Transverse colon (tissue), 4 donors: ENCODE measurements at regions of chr2 and their contacts with region 1.

Region 1: DNA sequence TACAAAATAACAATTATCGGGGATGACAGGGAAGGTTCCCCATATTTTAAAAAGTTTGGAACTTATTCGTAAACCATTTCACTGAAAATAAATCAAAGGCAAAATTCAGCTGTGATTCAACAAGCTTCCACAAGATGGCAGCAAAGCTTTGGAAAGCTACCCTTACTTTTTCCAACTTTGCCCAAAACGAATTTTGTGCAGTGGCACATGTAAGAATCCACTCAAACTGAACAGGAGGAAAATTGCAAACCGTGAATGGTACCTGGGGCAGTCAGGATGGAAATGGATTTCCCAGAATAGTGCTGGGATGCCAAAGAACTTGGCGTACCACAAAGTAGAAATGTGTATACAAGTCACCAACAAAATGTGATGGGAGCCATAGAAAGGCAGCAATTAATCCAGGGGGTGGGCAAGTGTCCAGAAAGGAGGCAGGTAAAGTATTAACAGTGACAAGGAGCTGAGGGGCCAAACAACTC is 10.7 kb downstream of the RPL31 start:
- DNase-seq: peak; percentile 19
- H3K4me3 ChIP-seq: no peak overlapping the region
- H3K27ac ChIP-seq: no peak overlapping the region
- H3K4me1 ChIP-seq: peaks cover 0 to 10% (median 0%) of the 10 kb centered on the region in 4 donors
- H3K27me3 ChIP-seq: no peaks in the 10 kb centered on the region
- CTCF ChIP-seq: peak; percentile 80 to 89 (median 84)
- EP300 ChIP-seq: no peak
- POLR2A ChIP-seq: no peak

Region 2: GRCh38 chr2:100780203-100781008 is 232.3 kb before region 1 on chr2:
- in situ Hi-C with region 1: no loop called
- intact Hi-C with region 1: no loop called
- DNase-seq: peak; percentile 29
- H3K4me3 ChIP-seq: no peak overlapping the region
- H3K27ac ChIP-seq: peak overlapping the region; percentile 44 to 70 (median 66)
- H3K4me1 ChIP-seq: peaks cover 0 to 17% (median 3%) of the 10 kb centered on the region in 4 donors
- H3K27me3 ChIP-seq: no peaks in the 10 kb centered on the region
- CTCF ChIP-seq: no peak
- EP300 ChIP-seq: no peak
- POLR2A ChIP-seq: no peak

Region 3: GRCh38 chr2:101030863-101031554 is 18.3 kb after region 1 on chr2:
- in situ Hi-C with region 1: no loop called
- intact Hi-C with region 1: no loop called
- DNase-seq: no peak
- H3K4me3 ChIP-seq: no peak overlapping the region
- H3K27ac ChIP-seq: no peak overlapping the region
- H3K4me1 ChIP-seq: peaks cover 0 to 12% (median 6%) of the 10 kb centered on the region in 4 donors
- H3K27me3 ChIP-seq: no peaks in the 10 kb centered on the region
- CTCF ChIP-seq: no peak
- EP300 ChIP-seq: no peak
- POLR2A ChIP-seq: no peak

Region 4: DNA sequence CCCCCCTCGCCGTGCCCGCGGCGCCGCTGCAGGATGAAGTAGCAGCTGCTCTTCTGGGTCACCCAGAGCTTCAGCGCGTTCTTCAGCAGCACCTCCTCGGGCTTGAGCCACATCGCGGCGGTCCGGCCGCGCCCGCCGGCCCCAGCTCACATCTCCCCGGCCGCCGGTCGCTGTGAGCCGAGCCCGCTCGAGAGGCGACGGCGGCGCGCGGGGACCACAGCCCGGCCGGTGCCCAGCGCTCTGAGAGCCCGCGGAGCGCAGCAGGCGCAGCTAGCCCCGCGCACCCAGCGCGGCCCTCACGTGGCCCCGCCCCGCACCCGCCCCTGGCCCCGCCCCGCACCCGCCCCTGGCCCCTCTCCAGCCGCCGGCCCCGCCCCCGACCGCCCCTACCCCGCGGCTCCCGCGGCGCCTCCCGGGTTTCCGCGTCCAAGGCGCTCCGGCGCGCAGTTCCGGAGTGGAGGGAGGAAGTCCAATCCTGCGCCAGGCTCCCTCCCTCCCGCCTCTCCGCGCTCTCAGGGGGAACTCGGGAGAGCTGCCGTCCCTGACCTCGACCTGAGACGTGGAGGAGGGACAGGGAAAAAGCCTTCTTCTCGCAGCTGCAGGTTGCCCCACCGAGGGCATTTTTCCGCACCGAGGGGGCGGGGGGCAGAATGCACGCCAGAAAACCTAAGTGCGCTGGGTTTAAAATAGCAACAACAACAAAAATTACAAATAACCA is 138.6 kb after region 1 on chr2 and contains the start of gene TBC1D8:
- in situ Hi-C with region 1: loop called in 2 of 4 experiments (anchors 5 to 10 kb)
- intact Hi-C with region 1: loop called (anchors 2 kb)
- DNase-seq: peak; percentile 89
- H3K4me3 ChIP-seq: peak within 1 kb of the TSS; percentile 55 to 92 (median 78)
- H3K27ac ChIP-seq: peak within 1 kb of the TSS; percentile 82 to 91 (median 88)
- H3K4me1 ChIP-seq: peaks cover 11 to 26% (median 21%) of the 10 kb centered on the region in 4 donors
- H3K27me3 ChIP-seq: no peaks in the 10 kb centered on the region
- CTCF ChIP-seq: peak in 1 of 5 experiments; percentile 9
- EP300 ChIP-seq: peak; percentile 23
- POLR2A ChIP-seq: peak; percentile 56
- total RNA-seq, gene TBC1D8: 26.5 to 232 (median 88.4) TPM